CD8-positive, alpha-beta memory T cell (primary cell): ENCODE measurements at regions of chr12 and their contacts with region 1.

Region 1: GRCh38 chr12:53065975-53066931 is 12.9 kb downstream of the SPRYD3 start:
- DNase-seq: peak; percentile 51 to 74 (median 61)
- H3K4me3 ChIP-seq: no peak overlapping the region
- H3K4me3 Mint-ChIP-seq: no peak overlapping the region
- H3K27ac ChIP-seq: no peak overlapping the region
- H3K27ac Mint-ChIP-seq: peak overlapping the region in 6 of 8 donors; percentile 64 to 91 (median 78)
- H3K4me1 ChIP-seq: peaks cover 7% of the 10 kb centered on the region
- H3K4me1 Mint-ChIP-seq: peaks cover 10 to 24% (median 17%) of the 10 kb centered on the region in 3 donors
- H3K27me3 ChIP-seq: no peaks in the 10 kb centered on the region
- H3K27me3 Mint-ChIP-seq: no peaks in the 10 kb centered on the region

Region 2: GRCh38 chr12:52969828-52970569 is 96.3 kb before region 1 on chr12:
- CTCF ChIA-PET with region 1: no interaction called
- POLR2A ChIA-PET with region 1: no interaction called
- DNase-seq: no peak
- H3K4me3 ChIP-seq: no peak overlapping the region
- H3K4me3 Mint-ChIP-seq: no peak overlapping the region
- H3K27ac ChIP-seq: no peak overlapping the region
- H3K27ac Mint-ChIP-seq: no peak overlapping the region
- H3K4me1 ChIP-seq: no peaks in the 10 kb centered on the region
- H3K4me1 Mint-ChIP-seq: no peaks in the 10 kb centered on the region
- H3K27me3 ChIP-seq: no peaks in the 10 kb centered on the region
- H3K27me3 Mint-ChIP-seq: peaks cover 8 to 22% of the 10 kb centered on the region in 2 donors

Region 3: GRCh38 chr12:53047221-53048042 is 18.8 kb before region 1 on chr12:
- CTCF ChIA-PET with region 1: interaction called, 70 read pairs
- POLR2A ChIA-PET with region 1: interaction called, 8 read pairs
- DNase-seq: peak; percentile 63 to 80 (median 72)
- H3K4me3 ChIP-seq: peak overlapping the region; percentile 28
- H3K4me3 Mint-ChIP-seq: peak overlapping the region; percentile 59 to 97 (median 84)
- H3K27ac ChIP-seq: no peak overlapping the region
- H3K27ac Mint-ChIP-seq: peak overlapping the region in 6 of 8 donors; percentile 29 to 87 (median 70)
- H3K4me1 ChIP-seq: peaks cover 7% of the 10 kb centered on the region
- H3K4me1 Mint-ChIP-seq: peaks cover 8 to 21% (median 10%) of the 10 kb centered on the region in 3 donors
- H3K27me3 ChIP-seq: no peaks in the 10 kb centered on the region
- H3K27me3 Mint-ChIP-seq: peaks cover 0 to 1% of the 10 kb centered on the region in 2 donors

Region 4: DNA sequence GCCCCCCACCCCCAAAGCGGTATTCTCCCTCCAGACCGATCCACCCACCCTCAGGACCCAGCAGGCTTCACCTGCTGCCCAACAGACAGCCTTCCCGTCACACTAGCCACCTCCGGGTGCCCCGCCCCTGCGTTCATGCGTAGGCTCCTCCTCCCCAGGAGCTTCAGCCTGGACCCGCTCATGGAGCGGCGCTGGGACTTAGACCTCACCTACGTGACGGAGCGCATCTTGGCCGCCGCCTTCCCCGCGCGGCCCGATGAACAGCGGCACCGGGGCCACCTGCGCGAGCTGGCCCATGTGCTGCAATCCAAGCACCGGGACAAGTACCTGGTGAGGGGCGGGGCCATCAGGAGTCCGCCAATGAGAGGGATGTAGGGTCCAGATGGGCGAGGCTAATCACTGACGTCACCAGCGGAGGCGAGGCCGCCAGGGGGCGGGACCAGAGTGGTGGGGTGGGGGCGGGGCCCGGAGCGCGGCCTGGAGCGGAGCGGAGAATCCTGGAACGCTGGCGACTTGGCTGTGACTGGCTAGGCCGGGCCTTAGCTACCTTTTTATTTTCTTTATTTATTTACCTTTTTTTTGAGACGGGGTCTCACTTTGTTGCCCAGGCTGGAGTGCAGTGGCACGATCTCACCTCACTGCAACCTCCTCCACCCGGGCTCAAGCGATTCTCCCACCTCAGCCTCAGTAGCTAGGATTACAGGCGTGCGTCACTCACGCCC is 12.0 kb before region 1 on chr12:
- CTCF ChIA-PET with region 1: interaction called, 70 read pairs
- POLR2A ChIA-PET with region 1: no interaction called
- DNase-seq: peak; percentile 91 to 96 (median 92)
- H3K4me3 ChIP-seq: peak overlapping the region; percentile 86
- H3K4me3 Mint-ChIP-seq: peak overlapping the region; percentile 89 to 96 (median 93)
- H3K27ac ChIP-seq: peak overlapping the region; percentile 55
- H3K27ac Mint-ChIP-seq: peak overlapping the region; percentile 84 to 98 (median 92)
- H3K4me1 ChIP-seq: peaks cover 7% of the 10 kb centered on the region
- H3K4me1 Mint-ChIP-seq: peaks cover 10 to 15% (median 12%) of the 10 kb centered on the region in 3 donors
- H3K27me3 ChIP-seq: no peaks in the 10 kb centered on the region
- H3K27me3 Mint-ChIP-seq: no peaks in the 10 kb centered on the region

Region 5: DNA sequence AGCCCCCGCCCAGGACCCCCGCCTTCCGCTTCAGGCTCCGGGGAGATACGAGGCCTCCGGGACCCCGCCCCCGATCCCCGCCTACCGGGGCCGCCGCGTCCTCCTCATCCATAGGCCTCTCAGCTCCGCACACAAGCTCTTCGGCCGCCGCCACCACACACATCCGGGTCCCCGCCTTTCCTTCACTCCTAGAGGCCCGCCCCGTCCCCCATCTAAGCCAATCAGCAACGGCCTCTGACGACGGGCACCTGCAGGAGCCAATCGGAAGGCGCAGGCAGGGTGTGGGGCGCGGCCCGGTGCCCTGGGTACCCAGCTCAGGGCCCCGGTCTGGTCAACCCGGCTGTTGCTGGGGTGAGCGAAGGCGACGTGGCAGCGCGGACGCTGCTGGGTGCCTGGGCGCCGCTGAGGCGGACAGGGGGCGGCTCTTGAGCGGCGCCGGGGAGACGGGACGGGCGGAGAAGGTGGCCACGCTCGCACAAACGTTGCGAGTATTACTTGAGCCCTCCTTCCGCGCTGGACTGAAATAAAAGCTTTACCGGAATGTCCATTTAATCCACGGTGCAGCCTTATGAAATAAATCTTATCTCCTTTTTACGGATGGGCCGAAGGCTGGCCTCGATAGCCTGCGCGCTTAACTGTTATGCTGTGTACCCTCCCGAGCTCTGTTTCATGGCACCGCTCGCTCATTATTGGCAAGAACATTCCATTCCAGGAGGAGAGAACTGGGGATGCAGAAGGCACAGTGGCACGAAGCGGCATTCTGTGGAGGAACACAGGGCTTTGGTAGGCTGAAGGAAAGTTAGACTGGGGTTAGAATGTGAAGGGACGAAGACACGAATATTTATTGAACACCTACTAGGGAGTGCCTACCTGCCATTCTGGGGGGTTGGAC is 13.2 kb after region 1 on chr12 and contains the start of gene SPRYD3:
- CTCF ChIA-PET with region 1: interaction called, 55 read pairs
- POLR2A ChIA-PET with region 1: interaction called, 6 read pairs
- DNase-seq: peak; percentile 95 to 98 (median 96)
- H3K4me3 ChIP-seq: peak within 1 kb of the TSS; percentile 87
- H3K4me3 Mint-ChIP-seq: peak within 1 kb of the TSS; percentile 85 to 95 (median 91)
- H3K27ac ChIP-seq: peak within 1 kb of the TSS; percentile 84
- H3K27ac Mint-ChIP-seq: peak within 1 kb of the TSS; percentile 83 to 98 (median 93)
- H3K4me1 ChIP-seq: peaks cover 21% of the 10 kb centered on the region
- H3K4me1 Mint-ChIP-seq: peaks cover 38 to 61% (median 50%) of the 10 kb centered on the region in 3 donors
- H3K27me3 ChIP-seq: no peaks in the 10 kb centered on the region
- H3K27me3 Mint-ChIP-seq: peaks cover 0 to 1% of the 10 kb centered on the region in 2 donors
- total RNA-seq, gene SPRYD3: 40.1 to 43.3 TPM

Region 6: DNA sequence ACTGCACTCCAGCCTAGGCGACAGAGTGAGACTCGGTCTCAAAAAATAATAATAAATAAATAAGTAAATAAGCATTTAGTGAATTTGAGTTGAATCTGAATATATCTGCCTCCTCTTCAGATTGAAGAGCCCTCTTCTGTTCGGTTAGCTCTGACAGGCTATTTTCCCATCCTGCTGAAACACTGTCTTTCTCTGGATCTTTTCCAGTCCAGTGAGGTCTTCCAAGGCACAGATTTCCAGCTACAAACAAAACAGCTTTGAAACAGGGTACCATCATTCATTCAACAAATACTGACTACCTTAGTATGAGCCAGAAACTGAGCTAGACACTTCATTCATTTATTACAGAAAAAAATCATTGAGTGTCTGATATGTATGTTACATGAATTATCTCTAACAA is 20.1 kb after region 1 on chr12:
- CTCF ChIA-PET with region 1: interaction called, 243 read pairs
- POLR2A ChIA-PET with region 1: no interaction called
- DNase-seq: no peak
- H3K4me3 ChIP-seq: no peak overlapping the region
- H3K4me3 Mint-ChIP-seq: no peak overlapping the region
- H3K27ac ChIP-seq: no peak overlapping the region
- H3K27ac Mint-ChIP-seq: no peak overlapping the region
- H3K4me1 ChIP-seq: no peaks in the 10 kb centered on the region
- H3K4me1 Mint-ChIP-seq: no peaks in the 10 kb centered on the region
- H3K27me3 ChIP-seq: no peaks in the 10 kb centered on the region
- H3K27me3 Mint-ChIP-seq: peaks cover 0 to 6% of the 10 kb centered on the region in 2 donors

Region 7: DNA sequence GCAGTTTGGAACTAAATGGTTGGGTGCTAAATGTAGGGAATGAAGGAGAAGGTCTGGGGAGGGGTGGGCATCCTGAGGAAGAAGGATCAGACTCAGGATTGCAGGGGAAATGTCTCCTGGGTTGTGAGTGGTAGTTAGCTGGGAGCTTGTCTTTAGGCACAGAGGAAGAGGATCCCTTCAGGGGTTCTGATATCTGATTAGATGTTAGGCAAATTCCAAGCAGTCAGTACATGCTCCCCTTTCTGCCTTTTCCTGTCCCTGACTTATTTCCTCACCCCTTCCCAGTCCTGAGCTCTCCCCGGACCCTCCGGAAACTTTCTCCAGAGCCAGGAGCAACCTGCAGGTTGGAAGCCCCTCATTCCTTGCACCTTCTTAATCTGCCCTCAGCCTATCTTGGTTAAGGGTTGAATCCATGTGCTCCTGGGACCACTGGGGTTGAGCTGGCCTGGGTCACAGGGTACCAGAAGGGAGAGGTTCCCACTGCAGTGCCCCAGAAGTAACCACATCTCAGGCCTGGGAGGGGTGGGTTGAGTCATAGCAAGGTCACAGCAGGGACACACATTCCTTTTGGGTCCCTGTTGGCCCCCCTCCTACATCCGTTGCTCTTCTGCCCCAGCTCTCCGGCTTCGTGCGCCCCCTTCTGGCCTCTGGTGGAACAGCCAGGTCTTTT is 32.9 kb after region 1 on chr12:
- CTCF ChIA-PET with region 1: interaction called, 243 read pairs
- POLR2A ChIA-PET with region 1: interaction called, 7 read pairs
- DNase-seq: peak; percentile 79 to 92 (median 85)
- H3K4me3 ChIP-seq: no peak overlapping the region
- H3K4me3 Mint-ChIP-seq: peak overlapping the region; percentile 51 to 82 (median 77)
- H3K27ac ChIP-seq: no peak overlapping the region
- H3K27ac Mint-ChIP-seq: peak overlapping the region; percentile 24 to 95 (median 83)
- H3K4me1 ChIP-seq: peaks cover 48% of the 10 kb centered on the region
- H3K4me1 Mint-ChIP-seq: peaks cover 42 to 65% (median 53%) of the 10 kb centered on the region in 3 donors
- H3K27me3 ChIP-seq: no peaks in the 10 kb centered on the region
- H3K27me3 Mint-ChIP-seq: peaks cover 0 to 3% of the 10 kb centered on the region in 2 donors

Region 8: GRCh38 chr12:53344824-53345485 is 278.7 kb after region 1 on chr12:
- CTCF ChIA-PET with region 1: interaction called, 11 read pairs
- POLR2A ChIA-PET with region 1: no interaction called
- DNase-seq: peak; percentile 53 to 80 (median 61)
- H3K4me3 ChIP-seq: peak overlapping the region; percentile 80
- H3K4me3 Mint-ChIP-seq: peak overlapping the region; percentile 90 to 98 (median 95)
- H3K27ac ChIP-seq: peak overlapping the region; percentile 4
- H3K27ac Mint-ChIP-seq: peak overlapping the region in 7 of 8 donors; percentile 75 to 95 (median 92)
- H3K4me1 ChIP-seq: peaks cover 9% of the 10 kb centered on the region
- H3K4me1 Mint-ChIP-seq: peaks cover 12 to 18% (median 14%) of the 10 kb centered on the region in 3 donors
- H3K27me3 ChIP-seq: no peaks in the 10 kb centered on the region
- H3K27me3 Mint-ChIP-seq: peaks cover 6 to 7% of the 10 kb centered on the region in 2 donors